CD8-positive, alpha-beta T cell (primary cell): ENCODE measurements at regions of chr3 and their contacts with region 1.

Region 1: GRCh38 chr3:197801891-197802778 is 11.1 kb downstream of the LRCH3 start:
- DNase-seq: peak in 5 of 9 experiments; percentile 24 to 65 (median 32)
- ATAC-seq: peak; percentile 70
- H3K4me3 ChIP-seq: no peak overlapping the region
- H3K4me3 Mint-ChIP-seq: peak overlapping the region; percentile 13
- H3K27ac ChIP-seq: peak overlapping the region in 1 of 2 experiments; percentile 27
- H3K27ac Mint-ChIP-seq: peak overlapping the region; percentile 74
- H3K4me1 ChIP-seq: peaks cover 22% of the 10 kb centered on the region
- H3K4me1 Mint-ChIP-seq: peaks cover 50% of the 10 kb centered on the region
- H3K27me3 ChIP-seq: no peaks in the 10 kb centered on the region
- H3K27me3 Mint-ChIP-seq: no peaks in the 10 kb centered on the region
- CTCF ChIP-seq: peak; percentile 71

Region 2: GRCh38 chr3:197730200-197730599 is 71.9 kb before region 1 on chr3:
- CTCF ChIA-PET with region 1: no interaction called
- POLR2A ChIA-PET with region 1: no interaction called
- intact Hi-C with region 1: no loop called
- DNase-seq: peak in 1 of 9 experiments; percentile 35
- ATAC-seq: peak; percentile 26
- H3K4me3 ChIP-seq: no peak overlapping the region
- H3K4me3 Mint-ChIP-seq: no peak overlapping the region
- H3K27ac ChIP-seq: no peak overlapping the region
- H3K27ac Mint-ChIP-seq: peak overlapping the region; percentile 37
- H3K4me1 ChIP-seq: peaks cover 9% of the 10 kb centered on the region
- H3K4me1 Mint-ChIP-seq: peaks cover 37% of the 10 kb centered on the region
- H3K27me3 ChIP-seq: no peaks in the 10 kb centered on the region
- H3K27me3 Mint-ChIP-seq: no peaks in the 10 kb centered on the region
- CTCF ChIP-seq: no peak

Region 3: GRCh38 chr3:197749601-197750395 is 52.3 kb before region 1 on chr3 and contains the start of gene FYTTD1:
- CTCF ChIA-PET with region 1: no interaction called
- POLR2A ChIA-PET with region 1: interaction called, 4 read pairs
- intact Hi-C with region 1: loop called in 1 of 2 experiments (anchors 1 kb)
- DNase-seq: peak; percentile 72 to 95 (median 89)
- ATAC-seq: peak; percentile 76
- H3K4me3 ChIP-seq: peak within 1 kb of the TSS; percentile 57 to 73
- H3K4me3 Mint-ChIP-seq: peak within 1 kb of the TSS; percentile 96
- H3K27ac ChIP-seq: peak within 1 kb of the TSS; percentile 64 to 79
- H3K27ac Mint-ChIP-seq: peak within 1 kb of the TSS; percentile 98
- H3K4me1 ChIP-seq: peaks cover 33% of the 10 kb centered on the region
- H3K4me1 Mint-ChIP-seq: peaks cover 46% of the 10 kb centered on the region
- H3K27me3 ChIP-seq: no peaks in the 10 kb centered on the region
- H3K27me3 Mint-ChIP-seq: no peaks in the 10 kb centered on the region
- CTCF ChIP-seq: peak; percentile 15
- total RNA-seq, gene FYTTD1: 80.9 to 88.0 TPM

Region 4: GRCh38 chr3:198113206-198114053 is 311.3 kb after region 1 on chr3:
- CTCF ChIA-PET with region 1: no interaction called
- POLR2A ChIA-PET with region 1: no interaction called
- intact Hi-C with region 1: no loop called
- DNase-seq: peak in 4 of 9 experiments; percentile 11 to 50 (median 16)
- ATAC-seq: no peak
- H3K4me3 ChIP-seq: no peak overlapping the region
- H3K4me3 Mint-ChIP-seq: peak overlapping the region; percentile 9
- H3K27ac ChIP-seq: no peak overlapping the region
- H3K27ac Mint-ChIP-seq: no peak overlapping the region
- H3K4me1 ChIP-seq: peaks cover 4% of the 10 kb centered on the region
- H3K4me1 Mint-ChIP-seq: peaks cover 8% of the 10 kb centered on the region
- H3K27me3 ChIP-seq: peaks cover 18 to 24% of the 10 kb centered on the region in 2 experiments
- H3K27me3 Mint-ChIP-seq: peaks cover 52% of the 10 kb centered on the region
- CTCF ChIP-seq: no peak